Endothelial cell of umbilical vein (primary cell): ENCODE measurements at regions of chr1 and their contacts with region 1.

Region 1: DNA sequence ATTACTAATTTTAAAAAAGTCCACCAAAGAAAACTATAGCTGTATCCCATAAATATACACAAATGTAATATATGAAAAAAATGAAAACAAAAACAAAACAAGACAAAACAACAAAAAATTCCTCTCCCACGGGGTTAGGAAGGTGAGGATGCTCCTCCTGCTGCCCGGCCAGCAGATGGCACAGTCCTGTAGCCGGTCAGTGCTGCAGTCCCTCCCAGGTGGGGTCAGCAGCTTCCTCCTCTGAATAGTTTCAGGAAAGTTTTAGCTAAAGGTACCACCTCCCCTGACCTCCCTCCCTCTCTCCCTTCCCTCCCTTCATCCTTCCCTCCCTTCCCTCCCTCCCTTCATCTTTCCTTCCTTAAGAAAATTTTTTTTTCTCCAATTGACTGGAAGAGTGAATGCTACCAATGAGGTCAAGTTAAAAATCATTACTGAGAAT is 67.8 kb upstream of the BCL10 start:
- DNase-seq: no peak
- H3K4me3 ChIP-seq: peak overlapping the region in 1 of 3 experiments; percentile 20
- H3K27ac ChIP-seq: peak overlapping the region; percentile 99
- H3K4me1 ChIP-seq: peaks cover 67% of the 10 kb centered on the region
- H3K27me3 ChIP-seq: no peaks in the 10 kb centered on the region
- CTCF ChIP-seq: peak; percentile 65 to 74
- POLR2A ChIP-seq: peak; percentile 54

Region 2: DNA sequence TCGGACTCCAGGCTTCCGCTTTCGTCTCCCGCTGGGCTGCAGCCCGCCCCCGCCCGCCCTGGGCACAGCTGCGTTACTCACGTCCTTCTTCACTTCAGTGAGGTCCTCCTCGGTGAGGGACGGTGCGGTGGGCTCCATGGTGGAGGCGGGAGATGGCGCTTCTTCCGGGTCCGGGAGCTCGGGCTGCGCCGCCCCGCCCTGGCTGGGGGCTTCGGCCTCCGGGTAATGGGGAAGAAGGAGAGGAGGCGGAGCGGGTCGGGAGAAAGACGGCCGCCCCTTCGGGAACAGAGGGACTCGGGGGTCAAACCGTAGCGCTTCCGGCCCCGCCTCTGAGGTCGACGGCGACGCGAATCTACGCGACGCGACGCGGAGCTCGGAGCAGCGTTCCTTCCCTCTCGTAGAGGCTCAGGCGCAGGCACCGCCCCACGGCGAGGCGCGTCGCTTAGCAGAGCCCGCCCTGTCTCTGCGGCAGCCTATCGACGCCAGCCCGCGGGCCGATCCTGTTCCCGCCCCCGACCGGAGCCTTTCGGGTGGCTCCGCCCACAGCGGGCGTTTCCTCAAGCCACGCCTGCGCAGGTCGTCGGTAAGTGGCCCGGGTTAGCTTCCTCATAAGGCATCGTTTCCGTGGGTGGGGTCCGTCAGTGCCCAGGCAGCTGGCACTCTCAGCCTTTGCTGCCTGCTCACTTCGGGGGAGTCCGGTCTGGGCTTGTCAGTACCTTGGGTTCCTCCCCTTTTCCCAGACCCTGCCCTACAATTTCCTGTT is 67.9 kb before region 1 on chr1 and contains the start of gene BCL10:
- CTCF ChIA-PET with region 1: interaction called, 5 read pairs
- POLR2A ChIA-PET with region 1: no interaction called
- dilution Hi-C with region 1: no loop called
- intact Hi-C with region 1: loop called (anchors 1 kb)
- DNase-seq: peak; percentile 99
- H3K4me3 ChIP-seq: peak within 1 kb of the TSS; percentile 95 to 99 (median 98)
- H3K27ac ChIP-seq: peak within 1 kb of the TSS; percentile 100
- H3K4me1 ChIP-seq: peaks cover 56% of the 10 kb centered on the region
- H3K27me3 ChIP-seq: no peaks in the 10 kb centered on the region
- CTCF ChIP-seq: no peak
- POLR2A ChIP-seq: peak; percentile 64
- total RNA-seq, gene BCL10: 74.5 and 78.6 TPM in 2 replicates

Region 3: GRCh38 chr1:85360730-85361493 is 16.6 kb after region 1 on chr1:
- CTCF ChIA-PET with region 1: interaction called, 11 read pairs
- POLR2A ChIA-PET with region 1: no interaction called
- dilution Hi-C with region 1: no loop called
- intact Hi-C with region 1: loop called (anchors 1 kb)
- DNase-seq: peak; percentile 28
- H3K4me3 ChIP-seq: no peak overlapping the region
- H3K27ac ChIP-seq: peak overlapping the region; percentile 74
- H3K4me1 ChIP-seq: peaks cover 26% of the 10 kb centered on the region
- H3K27me3 ChIP-seq: no peaks in the 10 kb centered on the region
- CTCF ChIP-seq: no peak
- POLR2A ChIP-seq: no peak

Region 4: DNA sequence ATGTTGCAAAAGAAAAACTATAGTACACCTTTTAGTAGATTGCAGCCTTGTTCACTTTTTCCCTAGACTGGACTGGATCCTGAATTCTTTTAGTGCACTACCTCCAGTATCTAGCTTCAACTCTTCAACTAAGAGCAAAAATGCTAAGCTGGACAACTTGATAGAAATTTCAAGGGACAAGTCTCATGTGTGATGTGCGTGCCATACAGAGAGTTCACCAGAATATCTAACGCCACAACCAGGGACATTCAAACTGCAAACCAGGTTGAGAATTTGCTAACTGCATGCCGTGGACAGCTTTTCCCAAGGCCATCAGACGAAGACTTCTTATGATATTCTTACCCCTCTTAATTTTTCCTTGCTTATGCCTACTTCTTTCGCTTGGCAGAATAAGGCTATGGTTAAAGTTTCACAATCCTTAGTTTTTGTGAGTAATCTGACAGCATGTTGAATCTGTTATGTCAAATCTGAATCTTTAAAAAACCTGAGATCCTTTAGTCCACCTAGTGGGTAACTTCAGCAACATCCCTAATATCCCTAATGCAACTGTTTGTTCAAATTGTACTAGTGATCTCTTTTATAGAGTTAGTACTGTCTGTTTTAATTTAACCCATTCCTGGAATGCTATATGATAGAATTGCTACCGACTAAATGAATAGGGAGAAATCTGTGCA is 54.3 kb after region 1 on chr1:
- CTCF ChIA-PET with region 1: interaction called, 34 read pairs
- POLR2A ChIA-PET with region 1: no interaction called
- dilution Hi-C with region 1: no loop called
- intact Hi-C with region 1: loop called (anchors 1 kb)
- DNase-seq: peak; percentile 49
- H3K4me3 ChIP-seq: no peak overlapping the region
- H3K27ac ChIP-seq: no peak overlapping the region
- H3K4me1 ChIP-seq: peaks cover 6% of the 10 kb centered on the region
- H3K27me3 ChIP-seq: no peaks in the 10 kb centered on the region
- CTCF ChIP-seq: peak in 1 of 2 donors; percentile 29
- POLR2A ChIP-seq: no peak

Region 5: DNA sequence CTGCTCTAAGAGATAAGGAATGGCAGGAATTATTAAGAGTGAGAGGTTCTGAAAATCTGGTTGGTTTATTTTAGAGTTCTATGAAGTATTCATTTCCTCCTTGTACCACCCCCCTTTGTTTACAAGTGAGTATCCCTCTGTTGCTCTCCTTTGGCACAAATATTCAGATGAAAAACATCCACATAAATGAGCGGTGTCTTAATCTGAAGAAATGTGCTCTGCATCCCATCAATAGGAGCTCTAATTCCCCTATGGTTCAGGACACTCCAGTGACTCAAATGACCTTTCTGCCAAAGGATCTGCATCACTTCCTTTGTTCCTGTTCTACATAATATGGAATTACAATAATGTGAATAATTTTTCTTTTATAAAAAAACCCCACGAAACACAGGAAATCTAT is 104.1 kb after region 1 on chr1:
- CTCF ChIA-PET with region 1: interaction called, 6 read pairs
- POLR2A ChIA-PET with region 1: interaction called, 4 read pairs
- dilution Hi-C with region 1: no loop called
- intact Hi-C with region 1: loop called (anchors 1 kb)
- DNase-seq: peak; percentile 91
- H3K4me3 ChIP-seq: no peak overlapping the region
- H3K27ac ChIP-seq: peak overlapping the region; percentile 98
- H3K4me1 ChIP-seq: peaks cover 34% of the 10 kb centered on the region
- H3K27me3 ChIP-seq: no peaks in the 10 kb centered on the region
- CTCF ChIP-seq: no peak
- POLR2A ChIP-seq: no peak

Region 6: DNA sequence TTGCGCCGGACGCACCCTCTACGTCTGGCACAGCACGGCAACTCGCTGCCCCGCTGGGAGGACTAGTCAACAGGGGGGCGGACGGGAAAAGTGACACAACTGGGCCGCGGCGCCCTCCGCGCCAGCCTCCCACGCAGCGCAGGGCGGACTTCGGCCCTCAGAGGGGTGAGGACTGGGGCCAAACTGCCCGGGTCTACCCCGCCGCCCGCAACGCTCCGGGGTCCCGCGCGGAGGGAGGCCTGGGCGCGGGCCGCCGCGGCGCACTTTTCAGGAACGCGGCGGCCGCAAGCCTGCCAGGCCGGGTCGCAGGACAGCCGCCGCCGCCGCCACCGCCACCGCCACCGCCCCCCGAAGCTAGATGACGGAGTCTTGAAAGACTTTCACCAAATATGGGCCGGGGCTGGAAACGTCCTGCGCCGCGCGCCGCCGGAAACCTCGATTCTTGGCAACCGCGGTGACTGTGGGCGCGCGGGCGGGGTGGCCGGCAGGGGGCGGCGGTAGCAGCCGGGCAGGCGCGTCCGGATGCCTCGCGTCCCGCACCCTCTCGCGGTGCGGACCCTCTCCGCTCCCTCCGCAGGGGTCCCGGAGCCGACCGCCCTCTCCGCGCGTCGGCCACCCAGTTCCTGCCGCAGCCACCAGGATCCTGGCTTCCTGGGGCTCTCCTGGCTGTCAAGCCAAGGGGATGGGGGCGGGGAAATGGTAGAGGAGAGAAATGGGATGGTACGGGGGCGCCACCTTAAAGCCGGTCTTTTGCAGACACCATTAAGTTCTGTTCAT is 232.6 kb after region 1 on chr1:
- CTCF ChIA-PET with region 1: interaction called, 10 read pairs
- POLR2A ChIA-PET with region 1: interaction called, 41 read pairs
- dilution Hi-C with region 1: no loop called
- intact Hi-C with region 1: loop called (anchors 1 kb)
- DNase-seq: peak; percentile 87
- H3K4me3 ChIP-seq: peak overlapping the region; percentile 67 to 93 (median 80)
- H3K27ac ChIP-seq: peak overlapping the region; percentile 98
- H3K4me1 ChIP-seq: peaks cover 55% of the 10 kb centered on the region
- H3K27me3 ChIP-seq: no peaks in the 10 kb centered on the region
- CTCF ChIP-seq: peak; percentile 69 to 83
- POLR2A ChIP-seq: peak; percentile 17

Region 7: GRCh38 chr1:85692730-85693314 is 348.5 kb after region 1 on chr1:
- CTCF ChIA-PET with region 1: interaction called, 9 read pairs
- POLR2A ChIA-PET with region 1: no interaction called
- dilution Hi-C with region 1: no loop called
- intact Hi-C with region 1: loop called (anchors 1 kb)
- DNase-seq: peak; percentile 60
- H3K4me3 ChIP-seq: no peak overlapping the region
- H3K27ac ChIP-seq: peak overlapping the region; percentile 38
- H3K4me1 ChIP-seq: peaks cover 7% of the 10 kb centered on the region
- H3K27me3 ChIP-seq: no peaks in the 10 kb centered on the region
- CTCF ChIP-seq: peak; percentile 22 to 26
- POLR2A ChIP-seq: no peak